ENCODE measurements at regions of chr1 and their contacts with region 1.

Region 1: GRCh38 chr1:46062651-46063319 is 69.6 kb downstream of the PIK3R3 start:
- DNase-seq: no peak
- ATAC-seq: peak; percentile 48
- H3K4me3 Mint-ChIP-seq: peak overlapping the region; percentile 37
- H3K27ac Mint-ChIP-seq: peak overlapping the region; percentile 68
- H3K4me1 Mint-ChIP-seq: peaks cover 19% of the 10 kb centered on the region
- H3K27me3 Mint-ChIP-seq: no peaks in the 10 kb centered on the region

Region 2: GRCh38 chr1:46021046-46021996 is 41.5 kb before region 1 on chr1:
- POLR2A ChIA-PET with region 1: no interaction called
- DNase-seq: no peak
- ATAC-seq: no peak
- H3K4me3 Mint-ChIP-seq: no peak overlapping the region
- H3K27ac Mint-ChIP-seq: no peak overlapping the region
- H3K4me1 Mint-ChIP-seq: no peaks in the 10 kb centered on the region
- H3K27me3 Mint-ChIP-seq: no peaks in the 10 kb centered on the region

Region 3: DNA sequence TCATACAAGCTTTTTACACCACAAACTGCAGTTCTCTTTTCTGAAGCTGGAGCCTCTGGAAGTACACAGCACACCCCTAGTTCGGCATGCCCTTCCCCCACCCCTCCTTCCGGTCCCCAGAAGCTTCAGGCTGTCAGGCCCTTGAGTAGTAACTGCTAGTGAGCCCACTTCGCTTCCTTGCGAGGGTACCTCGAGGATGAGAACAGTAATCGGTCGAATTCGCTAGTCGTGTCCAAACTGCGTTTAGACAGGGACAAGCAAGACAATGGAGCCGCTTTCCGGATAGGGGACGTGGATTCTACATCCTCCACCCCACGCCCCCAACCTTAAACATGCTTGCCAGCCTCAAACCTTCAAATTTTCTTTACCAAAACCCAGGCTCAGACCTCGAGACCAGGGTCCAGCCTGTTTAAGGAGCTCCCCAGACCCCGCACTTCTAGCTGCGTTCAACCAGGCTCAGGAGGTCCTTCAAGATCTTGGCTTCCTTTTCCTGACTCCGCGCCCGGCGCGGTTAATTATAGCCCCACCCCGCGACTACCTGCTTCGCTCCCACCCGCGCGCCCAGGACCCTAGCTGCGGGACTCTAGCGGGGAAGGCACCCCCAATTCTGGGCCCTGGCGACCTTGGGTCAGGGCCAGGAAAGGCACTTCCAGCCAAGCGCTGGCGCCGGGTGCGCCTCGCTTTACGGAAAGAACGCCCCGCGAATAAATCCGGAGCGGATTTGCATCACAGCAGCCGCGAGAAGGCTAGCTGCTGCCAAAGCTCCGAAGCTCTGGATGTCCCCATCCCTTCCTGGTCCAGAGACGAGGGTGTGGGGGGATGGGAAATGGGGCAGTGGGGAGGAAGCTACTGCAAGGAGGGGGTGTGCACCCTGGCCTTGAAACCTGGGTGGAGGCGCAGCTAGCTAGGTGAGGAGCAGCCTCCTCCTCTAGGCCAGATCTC is 104.0 kb after region 1 on chr1:
- POLR2A ChIA-PET with region 1: interaction called, 10 read pairs
- DNase-seq: peak; percentile 69
- ATAC-seq: peak; percentile 81
- H3K4me3 Mint-ChIP-seq: peak overlapping the region; percentile 82
- H3K27ac Mint-ChIP-seq: peak overlapping the region; percentile 90
- H3K4me1 Mint-ChIP-seq: peaks cover 16% of the 10 kb centered on the region
- H3K27me3 Mint-ChIP-seq: peaks cover 4% of the 10 kb centered on the region